ENCODE measurements at regions of chr11 and their contacts with region 1.

Region 1: GRCh38 chr11:36249246-36249645 is 40.0 kb downstream of the COMMD9 start:
- DNase-seq: no peak
- ATAC-seq: no peak
- H3K4me3 Mint-ChIP-seq: no peak overlapping the region
- H3K27ac Mint-ChIP-seq: no peak overlapping the region
- H3K4me1 Mint-ChIP-seq: no peaks in the 10 kb centered on the region
- H3K27me3 Mint-ChIP-seq: peaks cover 22% of the 10 kb centered on the region
- CTCF ChIP-seq: no peak

Region 2: DNA sequence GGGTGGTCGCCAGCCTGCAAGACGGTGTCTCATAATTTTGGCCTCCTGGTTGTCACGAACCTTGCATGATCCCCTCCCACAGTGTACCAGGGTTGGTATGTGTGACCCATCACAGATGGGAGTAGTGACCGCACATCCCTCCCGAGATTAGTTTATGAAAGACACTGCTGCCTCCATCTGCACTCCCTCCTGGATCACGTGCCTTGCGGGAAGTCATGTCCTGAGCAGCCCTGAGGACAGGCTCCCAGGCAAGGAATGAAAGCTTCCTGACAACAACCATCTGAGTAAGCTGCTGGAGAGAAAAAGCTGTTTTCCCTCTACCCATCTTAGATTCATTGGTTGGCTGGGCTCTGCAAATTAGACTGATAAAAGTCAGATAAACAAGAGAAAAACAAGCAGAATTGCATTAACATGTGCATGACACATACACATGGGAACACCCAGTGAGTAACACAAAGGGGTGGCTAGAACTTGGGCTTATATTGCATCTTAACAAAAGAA is 709.4 kb before region 1 on chr11:
- CTCF ChIA-PET with region 1: no interaction called
- POLR2A ChIA-PET with region 1: no interaction called
- intact Hi-C with region 1: loop called (anchors 5 kb)
- DNase-seq: no peak
- ATAC-seq: no peak
- H3K4me3 Mint-ChIP-seq: no peak overlapping the region
- H3K27ac Mint-ChIP-seq: no peak overlapping the region
- H3K4me1 Mint-ChIP-seq: no peaks in the 10 kb centered on the region
- H3K27me3 Mint-ChIP-seq: no peaks in the 10 kb centered on the region
- CTCF ChIP-seq: no peak